Keratinocyte (primary cell): ENCODE measurements at regions of chr9 and their contacts with region 1.

Region 1: DNA sequence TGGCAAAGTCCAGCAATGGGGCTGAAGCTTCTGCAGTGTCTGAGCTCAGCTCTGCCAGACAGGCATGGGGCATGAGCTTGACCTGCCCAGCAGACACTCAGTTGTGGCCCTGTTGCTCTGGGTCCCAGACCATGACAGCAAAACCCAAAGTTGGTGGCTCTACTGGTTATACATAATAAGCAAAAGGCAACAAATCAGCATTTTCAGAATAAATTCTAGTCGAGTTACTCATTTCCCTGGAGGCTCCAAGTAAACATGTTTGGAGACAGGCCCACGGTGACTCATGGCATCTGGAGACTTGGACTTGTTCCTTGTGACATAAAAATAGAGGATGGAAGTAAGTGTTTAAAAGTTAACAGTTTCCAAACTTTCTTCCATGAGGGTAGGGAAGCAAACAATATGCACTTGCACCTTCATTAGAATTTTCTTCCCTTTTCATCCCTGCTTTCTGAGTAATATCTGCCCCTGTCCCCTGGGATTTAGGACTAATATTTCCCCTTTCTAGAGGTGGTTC is 60.2 kb upstream of the SLC2A8 start:
- DNase-seq: peak; percentile 33
- H3K4me3 ChIP-seq: peak overlapping the region in 1 of 3 experiments; percentile 37
- H3K27ac ChIP-seq: peak overlapping the region; percentile 50
- H3K4me1 ChIP-seq: peaks cover 26% of the 10 kb centered on the region
- H3K27me3 ChIP-seq: no peaks in the 10 kb centered on the region
- CTCF ChIP-seq: no peak

Region 2: DNA sequence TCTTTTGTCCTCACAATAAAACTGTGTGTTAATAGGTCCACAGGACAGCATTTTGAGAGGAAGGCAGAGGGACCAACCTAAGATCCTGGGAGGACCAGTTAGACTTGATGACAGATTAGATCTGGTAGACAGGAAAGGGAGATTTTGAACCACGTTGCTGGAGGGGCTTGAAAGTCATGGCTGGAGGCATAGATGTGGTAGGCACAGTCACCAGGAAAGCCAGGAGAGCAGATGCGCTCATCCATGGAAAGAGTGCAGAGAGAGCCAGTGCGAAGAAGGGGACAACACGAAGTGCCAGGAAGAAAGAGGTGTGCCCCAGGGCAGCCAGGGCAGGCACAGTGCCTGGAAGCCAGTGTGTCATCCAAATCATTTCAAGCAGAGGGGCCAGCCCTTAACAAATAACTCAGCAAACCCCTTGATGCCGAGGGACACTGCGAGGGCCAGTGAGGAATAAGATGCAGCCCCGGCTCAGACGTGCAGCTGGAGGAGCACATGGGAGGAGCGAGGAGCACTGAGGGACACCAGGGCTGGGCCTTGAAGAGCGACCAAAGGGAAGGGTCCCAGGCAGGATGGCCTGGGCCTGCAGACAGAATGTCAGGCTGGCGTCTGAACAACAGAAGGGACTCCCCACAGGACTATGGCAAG is 47.4 kb after region 1 on chr9:
- dilution Hi-C with region 1: no loop called
- DNase-seq: no peak
- H3K4me3 ChIP-seq: no peak overlapping the region
- H3K27ac ChIP-seq: no peak overlapping the region
- H3K4me1 ChIP-seq: peaks cover 12% of the 10 kb centered on the region
- H3K27me3 ChIP-seq: no peaks in the 10 kb centered on the region
- CTCF ChIP-seq: no peak

Region 3: DNA sequence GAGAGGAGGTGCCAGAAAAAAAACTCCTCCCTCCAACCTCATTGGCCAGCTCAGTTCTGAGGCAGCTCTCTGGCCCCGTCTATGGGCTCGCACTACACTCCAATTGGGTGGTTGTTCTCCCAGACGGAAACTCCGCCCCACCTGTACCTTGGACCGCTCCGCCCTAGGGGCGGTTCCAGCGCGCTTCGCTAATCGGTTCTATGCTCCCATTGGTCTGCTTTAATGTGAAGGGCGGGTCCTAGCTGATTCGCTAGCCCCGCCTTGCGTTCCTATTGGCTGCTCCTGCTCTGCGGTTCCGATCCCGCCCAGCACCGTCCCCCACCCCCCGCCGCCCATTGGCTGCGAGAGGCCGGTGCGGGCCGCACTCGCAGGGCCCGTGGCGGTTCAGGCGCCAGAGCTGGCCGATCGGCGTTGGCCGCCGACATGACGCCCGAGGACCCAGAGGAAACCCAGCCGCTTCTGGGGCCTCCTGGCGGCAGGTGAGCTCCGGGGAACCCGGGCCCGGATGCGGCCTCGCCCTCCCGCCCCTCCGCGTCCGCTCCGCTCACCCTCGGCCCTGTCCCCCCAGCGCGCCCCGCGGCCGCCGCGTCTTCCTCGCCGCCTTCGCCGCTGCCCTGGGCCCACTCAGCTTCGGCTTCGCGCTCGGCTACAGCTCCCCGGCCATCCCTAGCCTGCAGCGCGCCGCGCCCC is 60.2 kb after region 1 on chr9 and contains the start of gene SLC2A8:
- dilution Hi-C with region 1: loop called (anchors 10 kb)
- DNase-seq: peak; percentile 98
- H3K4me3 ChIP-seq: peak within 1 kb of the TSS; percentile 70 to 78 (median 76)
- H3K27ac ChIP-seq: peak within 1 kb of the TSS; percentile 48
- H3K4me1 ChIP-seq: peaks cover 11% of the 10 kb centered on the region
- H3K27me3 ChIP-seq: no peaks in the 10 kb centered on the region
- CTCF ChIP-seq: peak in 2 of 3 experiments; percentile 18 to 41
- polyA plus RNA-seq, gene SLC2A8: 7.1 to 14.2 TPM (median 9.5 TPM) in 3 replicates

Region 4: GRCh38 chr9:127463911-127464310 is 127.1 kb after region 1 on chr9:
- dilution Hi-C with region 1: no loop called
- DNase-seq: no peak
- H3K4me3 ChIP-seq: no peak overlapping the region
- H3K27ac ChIP-seq: no peak overlapping the region
- H3K4me1 ChIP-seq: no peaks in the 10 kb centered on the region
- H3K27me3 ChIP-seq: no peaks in the 10 kb centered on the region
- CTCF ChIP-seq: no peak